ENCODE measurements at regions of chr6 and their contacts with region 1.

Region 1: DNA sequence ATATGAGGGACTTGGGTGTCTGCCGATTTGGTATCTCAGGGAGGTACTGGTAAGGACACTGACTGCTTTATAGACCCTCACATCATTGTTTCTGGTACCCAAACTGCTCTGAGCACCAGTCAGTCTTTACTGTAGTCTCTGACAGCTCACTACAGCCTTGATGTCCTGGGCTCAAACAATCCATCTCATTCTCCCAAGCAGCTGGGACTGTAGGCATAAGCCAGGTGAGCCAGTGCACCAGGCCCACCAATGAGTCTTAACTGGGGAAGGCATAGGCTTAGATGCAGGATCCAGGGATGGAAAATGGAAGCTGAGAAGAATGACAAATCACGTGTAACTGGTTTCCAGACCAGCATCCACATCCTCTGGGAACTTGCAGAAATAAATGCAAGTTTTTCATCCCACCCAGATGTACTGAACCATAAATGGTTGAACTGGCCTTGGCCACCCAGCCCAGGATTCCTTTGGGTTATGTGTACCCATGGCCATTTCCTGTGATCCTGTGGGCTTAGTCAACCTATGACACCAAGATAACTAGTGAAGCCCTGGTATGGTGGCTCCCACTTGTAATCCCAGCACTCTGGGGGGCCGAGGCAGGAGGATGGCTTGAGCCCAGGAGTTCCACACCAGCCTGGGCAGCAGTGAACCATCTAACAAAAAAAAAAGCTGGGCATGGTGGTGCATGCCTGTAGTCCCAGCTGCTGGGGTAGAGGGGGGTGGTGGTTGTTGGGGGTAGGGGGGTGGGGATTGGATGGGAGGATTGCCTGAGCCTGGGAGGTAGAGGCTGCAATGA is 5.8 kb downstream of the TUBB start:
- DNase-seq: no peak
- ATAC-seq: no peak

Region 2: GRCh38 chr6:30678964-30679726 is 46.8 kb before region 1 on chr6:
- intact Hi-C with region 1: loop called (anchors 2 kb)
- DNase-seq: peak; percentile 89
- ATAC-seq: peak; percentile 63 to 80

Region 3: DNA sequence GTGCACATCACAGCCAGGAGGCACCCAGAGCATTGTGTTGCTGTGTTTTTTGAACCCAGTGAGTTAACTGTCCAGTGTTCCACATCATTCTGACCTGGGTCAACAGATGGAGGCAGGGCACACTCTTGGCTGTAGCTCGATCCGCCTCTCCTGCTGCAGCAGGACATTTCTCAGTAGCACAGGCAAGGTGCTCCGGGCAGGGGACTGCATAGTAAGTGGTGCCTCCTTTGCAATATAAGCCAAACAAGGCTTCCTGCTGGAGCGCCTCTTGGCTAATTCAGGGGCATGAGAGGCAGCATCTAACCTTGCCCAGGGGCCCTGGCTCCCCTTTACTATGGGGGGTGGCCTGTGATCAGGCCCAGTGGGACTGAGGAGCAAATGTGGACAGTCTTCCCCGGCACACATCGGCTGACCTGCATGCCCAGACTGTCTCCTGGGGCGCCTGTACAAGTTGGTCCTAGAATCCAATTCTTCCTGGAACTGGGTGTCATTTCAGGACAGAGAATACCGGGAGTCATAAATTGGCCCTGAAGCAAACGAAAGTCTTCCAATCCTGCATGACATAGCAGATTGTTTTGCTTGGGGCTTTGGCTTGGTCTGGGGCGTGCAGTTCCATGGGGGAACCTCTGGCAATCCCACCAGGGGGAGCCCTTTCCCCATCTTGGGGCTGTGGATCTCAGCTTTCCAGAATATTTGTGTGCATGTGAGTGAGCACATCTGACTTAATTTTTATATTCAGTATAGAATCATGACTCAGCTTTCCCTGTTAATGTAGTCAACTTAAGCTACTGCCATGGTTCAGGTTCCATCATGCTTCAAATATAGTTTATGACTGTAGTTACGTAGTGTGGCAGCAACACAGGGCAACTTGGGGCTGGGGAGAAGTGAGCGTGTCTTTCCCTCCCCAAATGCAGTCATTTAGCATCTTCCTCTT is 102.4 kb after region 1 on chr6:
- intact Hi-C with region 1: no loop called
- DNase-seq: peak; percentile 87
- ATAC-seq: peak; percentile 93 to 95

Measured in left cardiac atrium (tissue), 4 donors.